ENCODE measurements at regions of chr11 and their contacts with region 1.

Region 1: DNA sequence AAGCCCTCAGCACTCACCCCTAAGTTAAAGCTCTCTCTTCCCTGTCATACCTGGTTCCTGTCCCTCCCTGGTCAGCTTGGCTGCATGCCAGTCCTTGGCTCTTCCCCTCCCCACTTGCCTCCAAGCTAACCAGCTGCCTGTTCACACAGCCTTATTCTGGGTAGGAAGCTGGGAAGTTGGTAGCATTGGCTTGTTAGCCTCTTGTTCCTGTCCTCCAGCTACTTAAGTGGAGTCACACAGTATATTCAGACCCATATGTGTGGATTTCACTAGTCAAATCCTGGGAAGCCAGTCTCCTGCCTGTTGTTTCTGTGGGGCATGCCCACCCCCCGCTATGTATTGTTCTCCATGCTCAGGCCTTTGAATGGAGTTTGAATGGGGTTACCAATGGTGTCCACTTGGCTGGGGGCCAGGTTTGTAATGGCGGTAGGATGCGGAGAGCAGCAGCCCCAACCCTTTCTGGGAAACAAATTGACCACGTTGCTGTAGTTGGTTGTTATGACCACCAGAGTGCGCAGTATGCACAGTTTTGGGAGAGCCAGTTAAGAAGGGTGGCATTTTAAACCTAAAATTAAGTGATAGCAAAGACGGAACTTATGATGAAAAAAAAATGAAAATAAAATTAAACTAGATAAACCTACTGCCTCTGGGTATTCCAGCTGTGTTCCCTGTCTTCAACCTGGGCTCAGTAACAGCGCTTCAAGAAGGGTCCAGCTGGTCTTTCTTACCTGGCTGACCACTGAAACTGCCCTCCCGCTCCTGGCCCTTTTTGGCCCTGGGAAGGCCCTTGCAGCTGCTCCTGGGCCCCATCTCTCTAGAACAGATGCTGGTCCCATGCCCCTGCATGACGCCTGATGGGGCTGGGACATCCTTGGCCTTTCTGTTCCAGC is 10.7 kb upstream of the RPS3 start:
- DNase-seq: peak; percentile 89

Region 2: GRCh38 chr11:75280227-75280701 is 108.4 kb before region 1 on chr11:
- intact Hi-C with region 1: loop called (anchors 5 kb)
- DNase-seq: peak; percentile 91

Region 3: GRCh38 chr11:75301601-75302345 is 86.9 kb before region 1 on chr11:
- intact Hi-C with region 1: no loop called
- DNase-seq: no peak

Region 4: GRCh38 chr11:75328426-75329277 is 60.0 kb before region 1 on chr11:
- intact Hi-C with region 1: loop called (anchors 5 kb)
- DNase-seq: peak; percentile 93

Region 5: GRCh38 chr11:75430720-75431490 is 42.3 kb after region 1 on chr11:
- intact Hi-C with region 1: loop called in 1 of 2 experiments (anchors 1 kb)
- DNase-seq: peak; percentile 57

Region 6: DNA sequence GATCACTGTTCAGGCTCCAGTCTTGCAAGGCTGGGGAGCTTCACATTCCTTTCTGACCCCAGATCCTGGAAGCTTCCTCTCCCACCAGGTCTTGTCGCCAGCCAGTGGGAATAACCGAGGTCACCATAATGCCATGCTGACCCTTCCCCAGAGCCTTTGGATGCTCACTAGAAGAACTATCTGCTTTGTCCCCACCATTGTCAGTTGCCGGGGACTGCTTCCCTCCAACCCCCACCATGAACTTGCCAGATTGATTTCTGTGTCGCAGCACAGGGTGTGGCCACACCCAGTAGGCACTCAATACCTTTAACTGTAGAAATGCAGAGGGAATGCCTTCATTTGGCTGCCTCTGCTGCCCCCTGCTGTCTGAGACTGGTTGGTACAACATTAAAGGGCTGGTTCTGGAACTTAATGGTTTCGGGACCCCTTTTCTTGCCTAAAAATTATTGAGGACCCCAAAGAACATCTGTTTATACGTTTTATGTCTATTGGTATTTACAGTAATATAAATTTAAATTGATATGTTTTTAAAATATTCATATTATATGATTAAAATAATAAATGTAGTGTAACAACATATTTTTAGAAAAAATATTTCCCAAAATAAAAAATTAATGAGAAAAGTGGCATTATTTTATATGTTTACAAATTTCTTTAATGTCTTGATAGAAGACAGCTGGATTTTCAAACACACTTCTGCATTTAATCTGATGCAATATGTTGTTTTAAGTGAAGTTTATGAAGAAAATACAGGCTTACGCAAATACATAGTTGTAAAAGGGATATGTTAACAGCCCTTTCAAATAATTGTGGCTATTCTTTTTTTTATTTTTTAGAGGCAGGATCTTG is 143.8 kb after region 1 on chr11:
- intact Hi-C with region 1: loop called in 1 of 2 experiments (anchors 1 kb)
- DNase-seq: no peak

Region 7: GRCh38 chr11:76543006-76543703 is 1154.5 kb after region 1 on chr11:
- intact Hi-C with region 1: no loop called
- DNase-seq: no peak

Measured in posterior vena cava (tissue), 2 donors.